HEK293 (cell line): ENCODE measurements at regions of chr6 and their contacts with region 1.

Region 1: GRCh38 chr6:71383901-71384489 is 95.4 kb downstream of the OGFRL1 start:
- H3K4me3 ChIP-seq: no peak overlapping the region
- H3K27ac ChIP-seq: no peak overlapping the region
- H3K4me1 ChIP-seq: peaks cover 10% of the 10 kb centered on the region
- CTCF ChIP-seq: no peak

Region 2: DNA sequence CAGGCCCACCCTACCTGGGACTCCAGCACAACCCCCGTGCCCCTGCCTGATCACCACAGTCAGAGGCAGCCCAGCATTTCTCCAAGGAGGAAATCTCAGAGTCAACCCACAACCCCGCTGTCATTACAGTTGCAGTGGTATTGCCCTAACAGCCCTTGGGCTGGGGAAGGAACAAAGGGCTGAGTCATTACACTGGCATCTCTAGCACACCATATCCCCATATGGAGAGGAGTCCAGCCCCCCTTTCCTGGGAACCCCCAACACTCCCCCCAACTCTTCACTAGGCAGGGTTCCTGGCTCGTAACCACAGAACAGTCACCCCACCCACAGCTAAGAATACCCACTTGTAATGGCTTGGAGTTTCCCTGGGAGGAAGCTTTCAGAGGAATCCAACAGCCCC is 244.7 kb before region 1 on chr6:
- CTCF ChIA-PET with region 1: no interaction called
- POLR2A ChIA-PET with region 1: no interaction called
- H3K4me3 ChIP-seq: no peak overlapping the region
- H3K27ac ChIP-seq: no peak overlapping the region
- H3K4me1 ChIP-seq: no peaks in the 10 kb centered on the region
- CTCF ChIP-seq: no peak

Region 3: GRCh38 chr6:71324194-71324785 is 59.7 kb before region 1 on chr6:
- CTCF ChIA-PET with region 1: no interaction called
- POLR2A ChIA-PET with region 1: no interaction called
- H3K4me3 ChIP-seq: no peak overlapping the region
- H3K27ac ChIP-seq: no peak overlapping the region
- H3K4me1 ChIP-seq: no peaks in the 10 kb centered on the region
- CTCF ChIP-seq: no peak

Region 4: GRCh38 chr6:71482742-71483141 is 98.7 kb after region 1 on chr6:
- CTCF ChIA-PET with region 1: interaction called, 21 read pairs
- POLR2A ChIA-PET with region 1: no interaction called
- H3K4me3 ChIP-seq: no peak overlapping the region
- H3K27ac ChIP-seq: no peak overlapping the region
- H3K4me1 ChIP-seq: no peaks in the 10 kb centered on the region
- CTCF ChIP-seq: no peak

Region 5: GRCh38 chr6:71510057-71510713 is 126.2 kb after region 1 on chr6:
- CTCF ChIA-PET with region 1: interaction called, 94 read pairs
- POLR2A ChIA-PET with region 1: no interaction called
- H3K4me3 ChIP-seq: no peak overlapping the region
- H3K27ac ChIP-seq: no peak overlapping the region
- H3K4me1 ChIP-seq: no peaks in the 10 kb centered on the region
- CTCF ChIP-seq: peak; percentile 54